CD4-positive, alpha-beta T cell (primary cell): ENCODE measurements at regions of chr2 and their contacts with region 1.

Region 1: DNA sequence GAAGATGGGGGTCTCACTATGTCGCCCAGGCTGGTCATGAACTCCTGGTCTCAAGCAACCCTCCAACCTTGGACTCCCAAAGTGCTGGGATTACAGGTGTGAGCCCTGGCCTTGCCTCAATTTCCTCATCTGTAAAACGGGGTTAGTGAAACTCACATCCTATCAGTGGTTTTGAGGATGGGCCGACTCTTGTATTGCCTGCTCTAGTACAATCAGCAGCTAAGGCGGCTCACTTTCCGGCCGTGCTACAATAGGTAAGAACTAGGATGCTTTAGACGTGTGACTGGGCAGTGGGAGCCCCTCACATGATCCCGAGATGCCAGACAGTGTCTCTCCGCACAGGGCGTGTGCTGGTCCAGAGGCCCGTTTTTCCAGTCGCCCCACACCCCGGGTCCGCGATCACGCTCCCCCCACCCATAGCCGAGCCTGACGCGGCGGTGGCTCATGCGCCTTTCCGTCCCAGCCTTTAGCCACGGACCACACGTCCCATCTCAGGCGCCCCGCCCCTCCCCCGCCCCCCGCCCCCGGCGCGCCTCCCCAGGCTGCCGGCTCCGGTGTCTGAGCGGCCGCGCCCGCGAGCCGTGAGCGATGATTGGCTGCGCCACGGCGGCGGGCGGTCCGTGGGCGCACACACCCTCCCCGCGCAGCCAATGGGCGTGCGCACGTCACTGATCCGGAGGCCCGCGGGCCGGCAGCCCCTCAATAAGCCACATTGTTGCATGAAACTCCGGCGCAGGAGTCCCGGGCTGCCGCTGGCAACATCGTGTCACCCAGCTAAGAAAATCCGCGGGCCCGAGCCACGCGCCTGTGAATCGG is at the start of gene HK2:
- DNase-seq: peak; percentile 54 to 92 (median 72)
- ATAC-seq: peak; percentile 84
- H3K4me3 ChIP-seq: peak within 1 kb of the TSS; percentile 75
- H3K4me3 Mint-ChIP-seq: peak within 1 kb of the TSS; percentile 94
- H3K27ac ChIP-seq: peak within 1 kb of the TSS in 1 of 2 donors; percentile 27
- H3K27ac Mint-ChIP-seq: peak within 1 kb of the TSS; percentile 84
- H3K4me1 ChIP-seq: peaks cover 42% of the 10 kb centered on the region
- H3K4me1 Mint-ChIP-seq: peaks cover 36% of the 10 kb centered on the region
- H3K27me3 ChIP-seq: no peaks in the 10 kb centered on the region
- H3K27me3 Mint-ChIP-seq: no peaks in the 10 kb centered on the region
- CTCF ChIP-seq: no peak
- total RNA-seq, gene HK2: 7.7 to 8.9 TPM

Region 2: GRCh38 chr2:73112913-73113633 is 1720.6 kb before region 1 on chr2 and contains the start of gene RAB11FIP5:
- CTCF ChIA-PET with region 1: no interaction called
- POLR2A ChIA-PET with region 1: no interaction called
- intact Hi-C with region 1: loop called in 1 of 2 experiments (anchors 5 kb)
- DNase-seq: peak; percentile 58 to 93 (median 75)
- ATAC-seq: peak; percentile 90
- H3K4me3 ChIP-seq: peak within 1 kb of the TSS; percentile 84
- H3K4me3 Mint-ChIP-seq: peak within 1 kb of the TSS; percentile 86
- H3K27ac ChIP-seq: peak within 1 kb of the TSS in 1 of 2 donors; percentile 21
- H3K27ac Mint-ChIP-seq: peak within 1 kb of the TSS; percentile 65
- H3K4me1 ChIP-seq: peaks cover 35% of the 10 kb centered on the region
- H3K4me1 Mint-ChIP-seq: peaks cover 27% of the 10 kb centered on the region
- H3K27me3 ChIP-seq: no peaks in the 10 kb centered on the region
- H3K27me3 Mint-ChIP-seq: no peaks in the 10 kb centered on the region
- CTCF ChIP-seq: no peak
- total RNA-seq, gene RAB11FIP5: 12.6 to 13.8 TPM

Region 3: GRCh38 chr2:74497777-74498499 is 335.7 kb before region 1 on chr2:
- CTCF ChIA-PET with region 1: no interaction called
- POLR2A ChIA-PET with region 1: no interaction called
- intact Hi-C with region 1: no loop called
- DNase-seq: peak in 4 of 14 experiments; percentile 26 to 62 (median 41)
- ATAC-seq: peak; percentile 31
- H3K4me3 ChIP-seq: peak overlapping the region; percentile 64
- H3K4me3 Mint-ChIP-seq: peak overlapping the region; percentile 82
- H3K27ac ChIP-seq: no peak overlapping the region
- H3K27ac Mint-ChIP-seq: no peak overlapping the region
- H3K4me1 ChIP-seq: peaks cover 37% of the 10 kb centered on the region
- H3K4me1 Mint-ChIP-seq: peaks cover 46% of the 10 kb centered on the region
- H3K27me3 ChIP-seq: peaks cover 38 to 53% of the 10 kb centered on the region in 2 experiments
- H3K27me3 Mint-ChIP-seq: peaks cover 53% of the 10 kb centered on the region
- CTCF ChIP-seq: no peak

Region 4: GRCh38 chr2:74715078-74715791 is 118.4 kb before region 1 on chr2:
- CTCF ChIA-PET with region 1: interaction called, 7 read pairs
- POLR2A ChIA-PET with region 1: interaction called, 5 read pairs
- intact Hi-C with region 1: loop called in 1 of 2 experiments (anchors 5 kb)
- DNase-seq: peak; percentile 62 to 87 (median 74)
- ATAC-seq: peak; percentile 91
- H3K4me3 ChIP-seq: peak overlapping the region; percentile 35
- H3K4me3 Mint-ChIP-seq: peak overlapping the region; percentile 86
- H3K27ac ChIP-seq: no peak overlapping the region
- H3K27ac Mint-ChIP-seq: no peak overlapping the region
- H3K4me1 ChIP-seq: peaks cover 5% of the 10 kb centered on the region
- H3K4me1 Mint-ChIP-seq: peaks cover 9% of the 10 kb centered on the region
- H3K27me3 ChIP-seq: peaks cover 9 to 26% of the 10 kb centered on the region in 2 experiments
- H3K27me3 Mint-ChIP-seq: peaks cover 12% of the 10 kb centered on the region
- CTCF ChIP-seq: peak; percentile 82

Region 5: GRCh38 chr2:74851191-74851566 is 17.6 kb after region 1 on chr2:
- CTCF ChIA-PET with region 1: interaction called, 35 read pairs
- POLR2A ChIA-PET with region 1: interaction called, 169 read pairs
- intact Hi-C with region 1: loop called (anchors 1 to 2 kb)
- DNase-seq: no peak
- ATAC-seq: no peak
- H3K4me3 ChIP-seq: no peak overlapping the region
- H3K4me3 Mint-ChIP-seq: no peak overlapping the region
- H3K27ac ChIP-seq: peak overlapping the region in 1 of 2 donors; percentile 90
- H3K27ac Mint-ChIP-seq: peak overlapping the region; percentile 98
- H3K4me1 ChIP-seq: peaks cover 69% of the 10 kb centered on the region
- H3K4me1 Mint-ChIP-seq: peaks cover 70% of the 10 kb centered on the region
- H3K27me3 ChIP-seq: no peaks in the 10 kb centered on the region
- H3K27me3 Mint-ChIP-seq: no peaks in the 10 kb centered on the region
- CTCF ChIP-seq: no peak

Region 6: GRCh38 chr2:74958274-74959105 is 124.9 kb after region 1 on chr2 and contains the start of gene POLE4:
- CTCF ChIA-PET with region 1: no interaction called
- POLR2A ChIA-PET with region 1: no interaction called
- intact Hi-C with region 1: loop called in 1 of 2 experiments (anchors 1 kb)
- DNase-seq: peak; percentile 89 to 96 (median 92)
- ATAC-seq: peak; percentile 87
- H3K4me3 ChIP-seq: peak within 1 kb of the TSS; percentile 60
- H3K4me3 Mint-ChIP-seq: peak within 1 kb of the TSS; percentile 87
- H3K27ac ChIP-seq: peak within 1 kb of the TSS; percentile 73 to 86
- H3K27ac Mint-ChIP-seq: peak within 1 kb of the TSS; percentile 83
- H3K4me1 ChIP-seq: peaks cover 22% of the 10 kb centered on the region
- H3K4me1 Mint-ChIP-seq: peaks cover 71% of the 10 kb centered on the region
- H3K27me3 ChIP-seq: no peaks in the 10 kb centered on the region
- H3K27me3 Mint-ChIP-seq: no peaks in the 10 kb centered on the region
- CTCF ChIP-seq: no peak
- total RNA-seq, gene POLE4: 34.9 to 38.4 TPM

Region 7: DNA sequence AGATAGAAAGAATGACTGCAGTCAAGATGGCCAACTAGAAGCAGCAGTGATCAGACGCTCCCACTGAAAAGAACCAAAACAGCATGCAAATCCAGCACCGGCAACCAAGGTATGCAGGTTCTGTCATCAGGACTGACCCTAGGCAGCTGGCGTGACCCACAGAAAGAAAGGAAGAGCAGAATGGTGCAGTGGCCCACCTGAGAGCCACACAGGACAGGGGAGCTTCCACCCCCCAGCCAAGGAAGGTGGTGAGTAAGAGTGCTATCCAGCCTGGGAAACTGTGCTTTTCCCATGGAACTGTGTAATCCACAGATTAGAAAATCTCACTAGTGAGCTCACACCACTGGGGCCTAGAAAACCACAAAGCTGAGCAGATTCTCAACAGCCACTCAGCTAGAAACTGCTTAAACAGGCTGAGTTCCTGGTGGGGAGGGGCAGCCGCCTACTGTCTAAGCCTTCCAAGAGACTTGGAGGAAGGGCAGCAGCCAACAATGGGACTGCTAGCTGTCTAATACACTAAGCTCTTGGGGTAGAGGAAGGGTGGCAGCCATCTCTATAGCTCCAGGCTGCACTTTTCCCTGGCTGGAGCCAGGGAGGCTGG is 599.2 kb after region 1 on chr2:
- CTCF ChIA-PET with region 1: no interaction called
- POLR2A ChIA-PET with region 1: no interaction called
- intact Hi-C with region 1: no loop called
- DNase-seq: no peak
- ATAC-seq: no peak
- H3K4me3 ChIP-seq: no peak overlapping the region
- H3K4me3 Mint-ChIP-seq: no peak overlapping the region
- H3K27ac ChIP-seq: no peak overlapping the region
- H3K27ac Mint-ChIP-seq: no peak overlapping the region
- H3K4me1 ChIP-seq: no peaks in the 10 kb centered on the region
- H3K4me1 Mint-ChIP-seq: no peaks in the 10 kb centered on the region
- H3K27me3 ChIP-seq: peaks cover 0 to 5% of the 10 kb centered on the region in 2 experiments
- H3K27me3 Mint-ChIP-seq: peaks cover 55% of the 10 kb centered on the region
- CTCF ChIP-seq: no peak